Activated naive CD4-positive, alpha-beta T cell treated with anti-CD3 and anti-CD28 coated beads, Interleukin-2, amount 10 ng/mL, durations not matched to agents 7 days and 5 days (primary cell): ENCODE measurements at regions of chr17 and their contacts with region 1.

Region 1: GRCh38 chr17:79839363-79840268 is at the start of gene CBX4:
- DNase-seq: peak; percentile 95
- H3K4me3 Mint-ChIP-seq: peak within 1 kb of the TSS; percentile 99
- H3K27ac Mint-ChIP-seq: peak within 1 kb of the TSS; percentile 98
- H3K4me1 Mint-ChIP-seq: peaks cover 60% of the 10 kb centered on the region
- H3K27me3 Mint-ChIP-seq: peaks cover 56% of the 10 kb centered on the region

Region 2: DNA sequence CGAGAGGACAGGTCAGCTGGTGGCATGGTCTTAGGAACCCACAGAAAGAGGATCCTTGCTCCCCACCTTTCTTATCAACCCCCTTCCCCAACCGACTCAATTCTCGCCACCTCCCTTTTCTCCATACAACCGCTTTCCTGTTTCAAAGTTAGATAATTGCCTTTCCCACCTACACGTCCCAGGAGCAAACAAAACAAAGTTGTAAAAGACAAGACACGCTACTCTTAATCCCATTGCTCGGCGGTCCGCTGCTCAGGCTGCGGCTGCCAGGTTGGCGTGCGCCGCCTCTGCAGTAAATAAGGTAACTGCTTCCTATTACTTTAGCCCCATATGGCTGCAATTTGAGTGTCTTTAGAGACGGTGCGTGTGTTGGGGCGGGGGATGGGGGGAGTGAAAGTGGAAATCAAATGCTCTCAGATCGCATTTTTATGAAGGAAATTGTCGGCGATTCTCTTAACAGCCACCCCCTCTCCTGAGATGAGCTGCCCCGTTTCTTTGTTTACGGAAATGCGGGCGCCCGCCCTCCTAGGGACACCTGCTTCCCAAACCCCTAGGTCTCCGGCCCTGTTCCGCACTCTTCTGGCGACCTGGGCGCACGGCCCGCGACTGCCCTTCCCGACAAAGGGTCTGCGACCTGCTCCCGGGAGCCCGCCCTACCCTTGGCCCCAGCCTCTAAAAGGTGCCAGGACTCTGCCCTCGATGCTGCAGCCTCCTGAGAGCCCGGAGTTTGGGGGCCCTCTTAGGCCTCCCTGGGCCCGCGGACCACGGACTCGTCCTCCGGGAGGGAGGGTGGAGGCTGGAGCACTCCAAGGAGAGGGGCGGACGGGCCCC is 39.1 kb before region 1 on chr17:
- CTCF ChIA-PET with region 1: interaction called, 16 read pairs
- DNase-seq: peak; percentile 56
- H3K4me3 Mint-ChIP-seq: peak overlapping the region; percentile 58
- H3K27ac Mint-ChIP-seq: peak overlapping the region; percentile 87
- H3K4me1 Mint-ChIP-seq: peaks cover 58% of the 10 kb centered on the region
- H3K27me3 Mint-ChIP-seq: peaks cover 97% of the 10 kb centered on the region